Right lobe of liver (tissue), 6 donors: ENCODE measurements at regions of chr11 and their contacts with region 1.

Region 1: GRCh38 chr11:16871368-16871767 is 132.9 kb downstream of the C11orf58 start:
- DNase-seq: no peak
- ATAC-seq: no peak
- H3K4me3 ChIP-seq: no peak overlapping the region
- H3K27ac ChIP-seq: no peak overlapping the region
- H3K4me1 ChIP-seq: no peaks in the 10 kb centered on the region
- H3K27me3 ChIP-seq: no peaks in the 10 kb centered on the region
- CTCF ChIP-seq: no peak
- POLR2A ChIP-seq: no peak

Region 2: DNA sequence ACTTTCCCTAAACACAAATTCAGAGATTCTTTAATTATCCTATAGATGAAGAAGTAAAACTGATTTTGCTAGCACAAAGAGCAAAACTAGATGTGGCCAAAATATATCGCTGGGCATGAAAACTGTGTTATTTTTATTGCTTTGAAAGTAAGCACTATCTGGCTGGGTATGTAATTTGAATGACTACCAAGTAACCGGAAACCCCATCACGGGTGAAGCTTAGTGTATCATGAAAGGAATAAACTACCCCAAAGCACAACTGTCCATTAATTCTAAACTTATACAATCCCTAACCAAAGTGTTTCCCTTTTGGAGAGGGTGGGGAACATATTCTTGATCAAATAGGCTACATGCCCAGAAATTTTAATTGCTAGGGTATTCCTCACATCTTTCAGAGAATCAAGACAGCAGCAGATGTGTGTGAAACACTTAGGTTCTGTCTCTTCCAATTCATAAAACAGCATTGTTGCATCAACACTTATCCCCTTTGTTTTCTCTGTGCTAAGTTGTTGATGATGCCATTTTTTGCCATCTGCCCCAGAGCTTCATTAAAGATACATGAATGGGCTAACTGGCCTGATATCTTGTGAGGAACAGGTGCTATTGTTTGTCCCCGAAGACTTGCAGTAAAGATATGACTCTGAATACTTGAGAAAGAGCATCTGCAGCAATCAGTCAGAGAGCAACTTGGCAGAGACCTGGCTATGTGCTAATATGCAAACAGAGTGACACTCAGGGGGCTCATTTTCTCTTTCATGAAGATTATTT is 753.2 kb before region 1 on chr11:
- intact Hi-C with region 1: no loop called
- DNase-seq: no peak
- ATAC-seq: no peak
- H3K4me3 ChIP-seq: no peak overlapping the region
- H3K27ac ChIP-seq: no peak overlapping the region
- H3K4me1 ChIP-seq: peaks cover 0 to 22% (median 4%) of the 10 kb centered on the region in 4 donors
- H3K27me3 ChIP-seq: no peaks in the 10 kb centered on the region
- CTCF ChIP-seq: no peak
- POLR2A ChIP-seq: no peak

Region 3: GRCh38 chr11:16820324-16821092 is 50.9 kb before region 1 on chr11:
- intact Hi-C with region 1: loop called in 1 of 2 experiments (anchors 10 kb)
- DNase-seq: peak; percentile 74 to 80 (median 77)
- ATAC-seq: peak; percentile 82 to 90 (median 84)
- H3K4me3 ChIP-seq: no peak overlapping the region
- H3K27ac ChIP-seq: no peak overlapping the region
- H3K4me1 ChIP-seq: peaks cover 0 to 16% (median 8%) of the 10 kb centered on the region in 4 donors
- H3K27me3 ChIP-seq: no peaks in the 10 kb centered on the region
- CTCF ChIP-seq: peak; percentile 83 to 92 (median 86)
- POLR2A ChIP-seq: no peak

Region 4: GRCh38 chr11:17046690-17047089 is 175.3 kb after region 1 on chr11:
- intact Hi-C with region 1: no loop called
- DNase-seq: no peak
- ATAC-seq: no peak
- H3K4me3 ChIP-seq: no peak overlapping the region
- H3K27ac ChIP-seq: no peak overlapping the region
- H3K4me1 ChIP-seq: peaks cover 0 to 4% (median 0%) of the 10 kb centered on the region in 4 donors
- H3K27me3 ChIP-seq: no peaks in the 10 kb centered on the region
- CTCF ChIP-seq: no peak
- POLR2A ChIP-seq: no peak